Mucosa of descending colon (tissue), 3 donors: ENCODE measurements at regions of chr3 and their contacts with region 1.

Region 1: DNA sequence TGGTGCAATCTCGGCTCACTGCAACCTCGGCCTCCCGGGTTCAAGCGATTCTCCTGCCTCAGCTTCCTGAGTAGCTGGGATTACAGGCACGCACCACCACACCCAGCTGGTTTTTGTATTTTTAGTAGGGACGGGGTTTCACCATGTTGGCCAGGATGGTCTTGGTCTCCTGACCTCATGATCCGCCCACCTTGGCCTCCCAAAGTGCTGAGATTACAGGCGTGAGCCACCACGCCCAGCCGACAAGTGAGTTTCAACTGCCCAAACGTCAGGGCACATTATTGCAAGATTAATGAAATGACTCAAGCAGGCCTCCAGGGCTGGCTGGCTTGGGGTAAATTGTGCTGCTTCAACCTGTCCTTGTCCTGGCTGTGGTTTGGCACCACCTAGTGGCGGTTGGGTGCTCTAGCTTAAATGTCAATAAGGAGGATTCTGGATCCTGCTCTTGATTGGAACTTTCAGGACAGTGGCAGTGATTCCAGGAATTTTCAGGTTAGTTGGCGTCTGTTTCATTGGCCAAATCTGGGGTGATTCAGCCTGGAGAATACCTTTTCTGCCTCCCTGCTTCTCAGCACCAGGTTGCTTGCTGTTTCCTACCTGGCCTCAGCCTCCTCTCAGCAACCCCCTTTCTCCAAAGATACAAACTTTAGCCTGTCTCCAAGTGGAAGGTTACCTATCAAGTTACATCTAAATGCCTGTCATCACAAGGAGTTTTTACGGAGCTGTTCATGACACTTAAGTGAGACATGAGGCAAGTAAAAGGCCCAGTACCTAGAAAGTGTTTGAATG is 32.4 kb upstream of the SACM1L start:
- DNase-seq: peak; percentile 85 to 92 (median 87)
- ATAC-seq: peak; percentile 94
- H3K4me3 ChIP-seq: no peak overlapping the region
- H3K4me1 ChIP-seq: peaks cover 7% of the 10 kb centered on the region
- CTCF ChIP-seq: peak; percentile 75

Region 2: DNA sequence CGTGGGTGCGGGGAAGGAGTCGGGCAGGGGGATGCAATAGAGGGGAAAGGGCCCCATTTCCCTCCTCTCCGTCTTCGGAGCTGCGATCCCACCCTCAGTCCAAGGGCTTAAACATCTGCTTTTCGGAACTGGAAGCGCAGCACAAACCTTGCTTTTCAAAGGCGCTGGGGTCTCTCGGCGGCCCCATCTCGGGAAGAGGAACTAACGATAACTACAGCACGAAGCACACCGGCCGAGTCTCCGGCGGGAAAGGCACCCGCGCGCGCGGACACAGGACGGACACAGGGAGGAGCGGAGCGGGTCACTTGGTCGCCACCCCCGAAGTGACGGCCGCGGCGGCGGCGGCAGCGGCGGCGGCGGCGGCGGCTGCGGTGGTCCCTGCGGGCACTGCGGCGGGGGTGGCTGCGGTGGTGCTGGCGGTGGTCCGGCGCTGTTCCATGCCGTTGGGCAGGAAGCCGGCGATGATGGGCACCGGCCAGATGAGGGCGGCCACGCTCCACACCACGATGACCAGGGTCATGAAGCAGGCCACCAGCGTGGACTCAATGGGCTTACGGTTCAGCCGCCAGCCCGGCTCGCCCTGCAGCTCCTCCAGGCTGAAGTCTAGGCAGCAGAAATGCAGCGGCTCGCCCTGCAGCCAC is 431.8 kb before region 1 on chr3:
- intact Hi-C with region 1: loop called in 1 of 2 experiments (anchors 10 kb)
- DNase-seq: peak; percentile 77 to 82 (median 81)
- ATAC-seq: peak; percentile 77
- H3K4me3 ChIP-seq: peak overlapping the region; percentile 17
- H3K4me1 ChIP-seq: peaks cover 5% of the 10 kb centered on the region
- CTCF ChIP-seq: peak; percentile 24

Region 3: DNA sequence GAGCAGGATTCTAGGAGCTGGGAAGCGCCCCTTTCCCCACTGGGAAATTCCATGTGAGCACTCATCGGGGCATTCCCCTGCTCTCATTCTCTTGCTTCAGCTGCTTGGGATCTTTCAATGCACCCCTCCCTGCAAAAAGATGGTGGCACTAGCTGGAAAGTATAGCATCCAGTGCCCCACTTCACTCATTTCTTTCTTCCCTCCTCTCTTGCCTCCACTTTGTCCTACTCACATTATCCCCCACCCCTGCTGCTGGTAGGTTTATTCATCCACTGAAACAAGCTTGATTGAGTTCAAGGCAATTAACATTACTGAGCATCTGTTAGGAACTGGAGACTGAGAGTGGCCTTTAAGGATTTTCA is 147.0 kb before region 1 on chr3:
- intact Hi-C with region 1: loop called (anchors 2 to 5 kb)
- DNase-seq: no peak
- ATAC-seq: no peak
- H3K4me3 ChIP-seq: no peak overlapping the region
- H3K4me1 ChIP-seq: peaks cover 13% of the 10 kb centered on the region
- CTCF ChIP-seq: no peak

Region 4: GRCh38 chr3:45528429-45528828 is 128.3 kb before region 1 on chr3:
- intact Hi-C with region 1: no loop called
- DNase-seq: no peak
- ATAC-seq: no peak
- H3K4me3 ChIP-seq: no peak overlapping the region
- H3K4me1 ChIP-seq: no peaks in the 10 kb centered on the region
- CTCF ChIP-seq: no peak

Region 5: GRCh38 chr3:45593708-45594609 is 62.8 kb before region 1 on chr3:
- intact Hi-C with region 1: loop called (anchors 5 to 10 kb)
- DNase-seq: peak; percentile 75 to 89 (median 85)
- ATAC-seq: peak; percentile 86
- H3K4me3 ChIP-seq: peak overlapping the region; percentile 56
- H3K4me1 ChIP-seq: peaks cover 32% of the 10 kb centered on the region
- CTCF ChIP-seq: no peak